ENCODE measurements at regions of chr5 and their contacts with region 1.

Region 1: DNA sequence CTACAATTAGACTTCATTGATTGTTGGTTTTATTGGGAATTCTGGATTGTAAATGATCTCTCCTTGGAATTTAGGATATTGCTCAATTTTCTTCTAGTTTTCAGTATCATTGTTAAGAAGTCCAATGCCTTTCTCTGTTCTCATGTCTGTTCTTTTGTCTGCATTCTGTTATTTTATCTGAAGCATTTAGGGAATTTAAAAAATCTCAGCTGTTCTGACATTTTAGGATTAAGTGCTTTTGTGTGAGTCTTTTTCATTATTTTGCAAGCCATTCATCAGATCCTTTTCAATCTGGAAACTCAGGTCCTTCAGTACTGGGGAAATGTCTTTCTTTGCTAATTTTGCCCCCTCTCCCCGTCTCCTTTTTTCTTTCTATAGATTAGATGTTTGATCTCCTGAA is 4.4 kb upstream of the FER start:
- DNase-seq: no peak
- CTCF ChIP-seq: no peak

Region 2: GRCh38 chr5:108727651-108728565 is 15.4 kb before region 1 on chr5:
- CTCF ChIA-PET with region 1: interaction called, 32 read pairs
- POLR2A ChIA-PET with region 1: interaction called, 3 read pairs
- DNase-seq: peak; percentile 84
- CTCF ChIP-seq: no peak

Region 3: GRCh38 chr5:108801776-108802175 is 58.4 kb after region 1 on chr5:
- CTCF ChIA-PET with region 1: no interaction called
- POLR2A ChIA-PET with region 1: no interaction called
- DNase-seq: no peak
- CTCF ChIP-seq: no peak